HEK293T (cell line): ENCODE measurements at regions of chr11 and their contacts with region 1.

Region 1: GRCh38 chr11:45771566-45772448 is 33.1 kb upstream of the SLC35C1 start:
- DNase-seq: peak; percentile 97

Region 2: DNA sequence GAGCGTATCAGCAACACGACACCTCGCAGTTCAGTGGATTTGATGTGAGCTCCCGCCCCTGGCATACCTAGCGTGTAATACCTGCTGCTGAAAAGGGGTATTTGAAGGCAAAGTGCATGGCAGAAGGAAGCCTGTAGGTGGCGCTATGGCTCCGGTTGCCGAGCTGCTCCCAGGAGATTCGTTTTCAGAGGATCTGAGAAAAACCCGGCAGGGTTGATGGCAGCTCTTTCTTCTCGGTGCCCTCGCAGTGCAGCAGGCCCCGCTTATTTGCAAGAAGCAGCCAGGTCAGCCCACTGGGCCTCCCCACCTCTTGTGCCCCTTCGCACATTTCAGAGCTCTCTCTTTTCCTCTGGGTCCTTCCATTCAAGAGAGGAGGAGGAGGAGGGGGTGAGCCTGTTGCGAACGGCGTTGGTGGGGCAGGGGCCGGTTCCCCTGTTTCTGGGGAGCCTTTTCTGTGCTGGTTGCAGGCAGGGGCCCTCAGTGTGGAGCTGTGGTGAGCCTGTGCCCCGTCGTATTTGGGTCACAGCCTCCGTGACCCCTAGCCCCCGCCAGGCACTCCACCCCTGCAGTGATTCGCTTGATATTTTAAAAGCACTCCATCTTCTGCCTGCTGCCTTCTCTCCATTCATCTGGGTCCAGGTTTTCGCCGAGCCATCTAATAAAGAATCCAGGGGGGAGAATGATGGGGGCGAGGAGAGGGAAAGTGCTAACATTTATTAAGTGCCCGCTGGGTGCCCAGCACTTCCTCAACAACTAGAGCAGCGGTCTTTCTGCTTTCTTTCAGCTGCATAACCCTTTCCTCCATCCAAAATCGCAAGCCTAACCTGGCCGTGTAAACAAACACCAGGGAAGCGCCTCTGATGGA is 400.3 kb before region 1 on chr11:
- CTCF ChIA-PET with region 1: interaction called, 42 read pairs
- POLR2A ChIA-PET with region 1: interaction called, 4 read pairs
- DNase-seq: peak; percentile 84

Region 3: DNA sequence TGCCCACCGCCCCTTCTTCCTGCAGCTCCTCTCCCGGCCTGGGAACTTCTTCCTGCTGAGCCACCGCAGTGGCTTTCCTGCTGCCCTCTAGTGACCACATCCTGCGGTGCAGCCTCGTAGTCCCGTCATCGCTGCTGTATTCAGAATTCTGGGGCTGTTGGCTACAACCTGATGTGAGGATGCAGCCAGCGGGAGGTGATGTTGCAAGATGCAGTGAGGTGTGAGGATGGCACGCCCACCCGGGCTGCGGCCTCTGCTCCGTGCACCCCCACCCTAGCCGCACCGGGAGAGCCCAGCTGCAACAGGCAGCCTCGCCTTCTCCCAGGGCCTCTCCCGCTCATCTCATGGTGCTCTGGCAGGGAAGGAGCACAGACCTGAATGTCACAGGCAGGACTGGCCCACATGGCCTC is 116.5 kb before region 1 on chr11:
- CTCF ChIA-PET with region 1: interaction called, 10 read pairs
- POLR2A ChIA-PET with region 1: no interaction called
- DNase-seq: peak; percentile 83

Region 4: GRCh38 chr11:45665206-45665932 is 106.4 kb before region 1 on chr11 and contains the start of gene CHST1:
- CTCF ChIA-PET with region 1: interaction called, 14 read pairs
- POLR2A ChIA-PET with region 1: interaction called, 4 read pairs
- DNase-seq: peak; percentile 55

Region 5: DNA sequence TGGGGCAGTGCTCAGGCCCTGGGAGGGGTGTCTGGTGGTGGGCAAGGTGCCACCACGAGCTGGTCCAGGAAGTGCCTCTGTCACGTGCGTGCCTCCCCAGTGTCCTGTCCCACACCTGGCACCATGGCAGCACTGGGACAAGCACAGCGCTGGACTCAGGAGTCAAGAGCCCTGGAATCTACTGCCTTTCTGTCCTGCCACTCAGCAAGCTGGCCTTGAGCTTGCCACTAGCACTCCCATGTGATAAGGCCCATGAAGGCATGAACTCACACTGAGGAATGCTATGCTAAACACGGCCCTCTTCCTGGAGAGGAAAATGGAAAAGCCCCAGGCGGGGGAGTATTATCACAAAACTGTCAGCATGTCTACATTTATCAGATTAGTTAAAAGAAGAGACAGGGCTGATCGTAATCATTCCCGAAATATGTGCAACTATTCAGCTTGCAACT is 17.5 kb before region 1 on chr11:
- CTCF ChIA-PET with region 1: interaction called, 21 read pairs
- POLR2A ChIA-PET with region 1: no interaction called
- DNase-seq: no peak

Region 6: DNA sequence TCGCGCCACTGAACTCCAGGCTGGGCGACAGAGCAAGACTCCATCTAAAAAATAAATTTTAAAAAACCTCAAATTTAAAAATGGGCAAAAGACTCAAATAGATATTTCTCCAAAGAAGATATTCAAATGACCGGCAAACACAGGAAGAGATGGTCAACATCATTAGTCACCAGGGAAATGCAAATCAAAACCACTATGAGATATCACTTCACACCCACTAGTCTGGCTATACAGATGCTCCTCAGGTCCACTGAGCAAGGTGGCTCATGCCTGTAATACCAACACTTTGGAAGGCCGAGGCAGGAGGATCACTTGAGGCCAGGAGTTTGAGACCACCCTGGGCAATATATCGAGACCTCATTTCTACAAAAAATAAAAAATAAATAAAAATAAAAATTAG is 10.1 kb before region 1 on chr11:
- CTCF ChIA-PET with region 1: interaction called, 13 read pairs
- POLR2A ChIA-PET with region 1: no interaction called
- DNase-seq: no peak

Region 7: GRCh38 chr11:45794169-45794568 is 22.4 kb after region 1 on chr11:
- CTCF ChIA-PET with region 1: no interaction called
- POLR2A ChIA-PET with region 1: no interaction called
- DNase-seq: no peak

Region 8: DNA sequence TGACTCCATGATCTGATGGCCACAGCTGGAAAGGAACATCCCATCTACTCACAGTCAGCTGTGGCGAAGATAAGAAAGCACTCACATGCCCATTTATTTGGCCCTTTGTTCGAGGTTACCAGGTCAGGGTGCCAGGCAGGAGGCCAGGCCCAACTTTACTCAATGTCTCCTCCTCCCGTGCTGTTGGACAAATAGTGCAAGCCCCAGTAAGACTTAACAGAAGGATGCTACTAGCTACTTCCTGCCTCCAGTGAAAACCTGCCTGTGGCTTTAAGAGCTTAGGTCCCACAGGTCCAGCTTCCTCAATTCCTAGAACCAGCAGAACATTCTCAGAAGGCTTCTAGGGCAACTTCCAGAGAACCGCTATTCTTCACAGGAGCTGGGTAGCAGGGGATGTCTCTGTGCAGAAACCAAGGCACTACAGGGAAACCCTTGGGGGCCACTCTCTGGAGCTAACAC is 62.5 kb after region 1 on chr11:
- CTCF ChIA-PET with region 1: no interaction called
- POLR2A ChIA-PET with region 1: no interaction called
- DNase-seq: no peak